ENCODE measurements at regions of chr11 and their contacts with region 1.

Region 1: DNA sequence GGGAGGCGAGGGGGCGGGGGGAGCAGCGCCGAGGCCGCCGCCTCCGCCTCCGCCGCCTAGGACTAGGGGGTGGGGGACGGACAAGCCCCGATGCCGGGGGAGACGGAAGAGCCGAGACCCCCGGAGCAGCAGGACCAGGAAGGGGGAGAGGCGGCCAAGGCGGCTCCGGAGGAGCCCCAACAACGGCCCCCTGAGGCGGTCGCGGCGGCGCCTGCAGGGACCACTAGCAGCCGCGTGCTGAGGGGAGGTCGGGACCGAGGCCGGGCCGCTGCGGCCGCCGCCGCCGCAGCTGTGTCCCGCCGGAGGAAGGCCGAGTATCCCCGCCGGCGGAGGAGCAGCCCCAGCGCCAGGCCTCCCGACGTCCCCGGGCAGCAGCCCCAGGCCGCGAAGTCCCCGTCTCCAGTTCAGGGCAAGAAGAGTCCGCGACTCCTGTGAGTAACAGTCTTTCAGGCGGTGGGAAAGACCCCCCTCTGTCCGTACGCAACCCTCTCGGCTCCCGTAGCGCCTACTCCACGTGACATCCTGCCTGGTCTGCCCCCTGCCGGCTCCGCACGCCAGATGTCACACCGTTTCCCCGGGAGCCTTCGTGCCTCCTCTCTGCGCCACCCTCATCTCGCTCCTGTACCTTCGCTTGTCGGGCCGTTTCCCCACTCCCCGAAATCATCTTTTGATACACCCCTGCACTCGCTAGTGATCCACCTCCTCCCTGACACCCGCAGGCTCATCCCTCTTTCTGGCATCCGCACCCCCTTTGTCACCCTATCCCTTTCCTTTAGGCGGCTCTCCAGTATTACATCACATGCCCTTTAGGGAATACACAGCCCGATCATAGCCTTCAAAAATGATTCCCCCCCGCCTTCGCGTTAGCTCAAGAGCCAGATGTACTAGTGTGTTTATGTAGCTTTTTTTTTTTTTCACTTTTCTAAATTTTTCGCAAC is 598 bp downstream of the ZFP91 start:
- DNase-seq: peak; percentile 86
- H3K4me3 ChIP-seq: peak overlapping the region; percentile 80 to 91 (median 88)
- H3K27ac ChIP-seq: peak overlapping the region; percentile 88
- H3K4me1 ChIP-seq: peaks cover 36% of the 10 kb centered on the region
- H3K27me3 ChIP-seq: no peaks in the 10 kb centered on the region
- CTCF ChIP-seq: peak; percentile 63 to 82

Region 2: GRCh38 chr11:57667736-57668435 is 911.6 kb before region 1 on chr11 and contains the start of gene ZDHHC5:
- CTCF ChIA-PET with region 1: no interaction called
- dilution Hi-C with region 1: no loop called
- in situ Hi-C with region 1: no loop called
- intact Hi-C with region 1: loop called (anchors 5 kb)
- DNase-seq: peak; percentile 99
- H3K4me3 ChIP-seq: peak within 1 kb of the TSS; percentile 99 to 100 (median 99)
- H3K27ac ChIP-seq: peak within 1 kb of the TSS; percentile 95
- H3K4me1 ChIP-seq: peaks cover 20% of the 10 kb centered on the region
- H3K27me3 ChIP-seq: no peaks in the 10 kb centered on the region
- CTCF ChIP-seq: peak; percentile 16 to 52
- total RNA-seq, gene ZDHHC5: 81.7 to 101 TPM

Region 3: GRCh38 chr11:58495906-58496305 is 83.6 kb before region 1 on chr11:
- CTCF ChIA-PET with region 1: no interaction called
- dilution Hi-C with region 1: no loop called
- in situ Hi-C with region 1: no loop called
- intact Hi-C with region 1: no loop called
- DNase-seq: no peak
- H3K4me3 ChIP-seq: no peak overlapping the region
- H3K27ac ChIP-seq: no peak overlapping the region
- H3K4me1 ChIP-seq: peaks cover 13% of the 10 kb centered on the region
- H3K27me3 ChIP-seq: no peaks in the 10 kb centered on the region
- CTCF ChIP-seq: peak in 1 of 2 donors; percentile 13

Region 4: DNA sequence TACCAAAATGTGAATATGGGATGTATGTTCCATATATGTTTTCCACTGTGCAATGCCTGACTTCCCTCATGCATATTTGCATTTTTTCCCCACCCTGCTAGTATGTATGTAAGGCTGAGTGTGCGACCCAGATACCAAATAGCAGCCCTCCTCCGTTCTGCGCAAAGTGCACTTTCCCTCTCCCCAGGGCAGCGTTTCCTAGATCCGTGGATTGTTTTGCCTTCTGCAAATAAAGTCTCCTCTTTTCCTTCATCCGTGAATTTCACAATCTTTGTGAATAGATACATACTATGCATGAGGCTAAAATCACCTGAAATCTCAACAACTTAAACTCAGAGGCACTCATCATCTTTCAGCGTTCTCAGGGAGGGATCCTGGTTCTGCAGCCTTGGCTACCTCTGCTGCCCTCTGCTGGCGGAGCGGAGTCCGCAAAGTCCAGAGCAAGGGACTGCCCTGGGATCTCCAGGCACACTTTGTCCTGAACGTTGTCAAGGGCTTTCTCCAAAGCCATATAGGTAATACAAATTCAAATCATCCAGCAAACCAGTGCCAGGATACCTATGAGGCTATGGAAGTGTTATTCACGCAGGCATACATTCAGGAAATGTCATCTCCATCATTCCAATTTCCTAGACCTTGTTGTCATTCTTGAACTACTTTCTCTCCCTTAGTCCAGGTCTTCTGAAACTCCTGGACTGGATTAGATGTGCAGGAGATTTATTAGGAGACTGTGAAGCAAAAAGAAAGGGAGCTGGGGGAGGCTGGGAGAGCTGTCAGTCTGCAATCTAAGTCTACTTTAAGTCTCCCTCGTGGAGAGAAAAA is 96.1 kb after region 1 on chr11:
- CTCF ChIA-PET with region 1: no interaction called
- dilution Hi-C with region 1: no loop called
- in situ Hi-C with region 1: no loop called
- intact Hi-C with region 1: loop called (anchors 1 kb)
- DNase-seq: peak; percentile 44
- H3K4me3 ChIP-seq: no peak overlapping the region
- H3K27ac ChIP-seq: no peak overlapping the region
- H3K4me1 ChIP-seq: peaks cover 5% of the 10 kb centered on the region
- H3K27me3 ChIP-seq: no peaks in the 10 kb centered on the region
- CTCF ChIP-seq: peak; percentile 97 to 99

Region 5: DNA sequence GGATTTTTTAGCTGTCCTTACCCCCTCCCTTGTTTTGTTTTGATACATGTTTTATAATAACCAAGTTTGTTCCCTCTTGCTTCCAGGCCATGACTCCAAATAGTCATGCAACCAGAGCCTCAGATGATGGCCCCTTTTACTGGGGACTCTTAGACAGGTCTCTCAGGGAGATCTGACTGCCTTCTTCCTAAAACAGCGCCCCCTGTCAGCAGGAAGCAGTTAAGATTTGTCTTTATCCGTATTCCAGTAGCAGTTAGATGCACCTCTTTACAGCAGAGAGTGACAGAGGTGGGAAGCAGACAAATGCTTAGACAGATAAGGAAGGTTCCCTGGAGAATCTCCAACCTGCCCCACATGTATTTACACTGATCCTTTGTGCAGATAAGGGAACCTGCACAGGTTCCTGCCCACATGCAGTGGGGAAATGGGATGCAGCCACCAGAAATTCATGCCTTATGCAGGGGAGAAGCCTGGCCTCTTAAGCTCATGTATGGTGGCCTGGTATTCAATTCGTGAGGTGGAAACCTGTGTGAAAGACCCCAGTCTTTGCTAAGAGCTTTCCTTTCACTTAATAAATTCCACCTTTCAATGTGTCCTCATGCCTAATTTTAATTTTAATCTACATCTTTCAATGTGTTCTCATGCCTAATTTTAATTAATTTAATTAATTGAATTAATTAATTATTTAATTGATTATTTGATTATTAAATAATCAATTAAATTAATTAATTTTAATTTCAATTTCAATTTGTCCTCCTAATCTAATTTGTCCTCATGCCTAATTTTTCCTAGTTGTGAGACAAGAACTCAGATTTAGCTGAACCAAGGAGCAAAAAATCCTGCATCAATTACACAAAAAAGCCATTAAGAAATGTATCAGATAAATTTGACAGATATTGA is 163.8 kb after region 1 on chr11:
- CTCF ChIA-PET with region 1: no interaction called
- dilution Hi-C with region 1: no loop called
- in situ Hi-C with region 1: no loop called
- intact Hi-C with region 1: no loop called
- DNase-seq: no peak
- H3K4me3 ChIP-seq: no peak overlapping the region
- H3K27ac ChIP-seq: no peak overlapping the region
- H3K4me1 ChIP-seq: peaks cover 4% of the 10 kb centered on the region
- H3K27me3 ChIP-seq: no peaks in the 10 kb centered on the region
- CTCF ChIP-seq: peak in 1 of 2 donors; percentile 13

Region 6: DNA sequence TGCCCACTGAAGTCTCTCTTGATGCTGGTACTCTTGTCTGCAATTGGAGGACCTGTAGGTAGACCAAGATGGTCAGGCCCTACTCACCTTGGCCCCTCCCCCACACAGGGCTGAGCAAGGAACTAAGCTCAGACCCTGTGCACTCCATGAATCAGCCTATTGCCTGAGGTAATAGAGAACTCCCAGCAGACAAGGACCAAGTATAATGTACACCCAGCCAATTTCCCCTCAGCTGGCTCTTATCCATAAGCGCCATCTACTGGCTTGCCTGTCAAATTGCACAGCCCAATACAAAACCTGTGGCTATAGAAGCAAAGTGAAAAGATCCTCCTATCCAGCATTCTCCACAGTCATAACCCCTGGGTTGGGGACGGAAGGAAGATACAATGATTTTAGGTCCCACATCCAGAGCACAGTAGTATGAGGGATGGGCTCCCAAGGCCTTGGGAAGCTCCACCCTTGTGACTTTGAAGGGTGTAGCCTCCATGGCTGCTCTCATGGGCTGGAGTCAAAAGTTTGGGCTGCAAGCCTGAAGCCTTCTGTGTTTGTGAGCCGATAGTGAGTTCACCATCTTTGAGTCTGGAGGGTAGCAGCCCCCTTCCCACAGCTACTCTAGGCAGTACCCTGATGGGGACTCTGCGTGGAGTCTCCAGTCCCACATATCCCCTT is 209.0 kb after region 1 on chr11:
- CTCF ChIA-PET with region 1: no interaction called
- dilution Hi-C with region 1: no loop called
- in situ Hi-C with region 1: loop called in 1 of 2 experiments (anchors 5 kb)
- intact Hi-C with region 1: loop called (anchors 1 kb)
- DNase-seq: peak; percentile 77
- H3K4me3 ChIP-seq: no peak overlapping the region
- H3K27ac ChIP-seq: peak overlapping the region; percentile 62
- H3K4me1 ChIP-seq: peaks cover 20% of the 10 kb centered on the region
- H3K27me3 ChIP-seq: no peaks in the 10 kb centered on the region
- CTCF ChIP-seq: peak; percentile 94 to 97

Region 7: GRCh38 chr11:58963528-58964104 is 384.2 kb after region 1 on chr11:
- CTCF ChIA-PET with region 1: no interaction called
- dilution Hi-C with region 1: no loop called
- in situ Hi-C with region 1: no loop called
- intact Hi-C with region 1: loop called (anchors 1 kb)
- DNase-seq: peak; percentile 89
- H3K4me3 ChIP-seq: no peak overlapping the region
- H3K27ac ChIP-seq: no peak overlapping the region
- H3K4me1 ChIP-seq: peaks cover 4% of the 10 kb centered on the region
- H3K27me3 ChIP-seq: peaks cover 2% of the 10 kb centered on the region
- CTCF ChIP-seq: no peak

Region 8: DNA sequence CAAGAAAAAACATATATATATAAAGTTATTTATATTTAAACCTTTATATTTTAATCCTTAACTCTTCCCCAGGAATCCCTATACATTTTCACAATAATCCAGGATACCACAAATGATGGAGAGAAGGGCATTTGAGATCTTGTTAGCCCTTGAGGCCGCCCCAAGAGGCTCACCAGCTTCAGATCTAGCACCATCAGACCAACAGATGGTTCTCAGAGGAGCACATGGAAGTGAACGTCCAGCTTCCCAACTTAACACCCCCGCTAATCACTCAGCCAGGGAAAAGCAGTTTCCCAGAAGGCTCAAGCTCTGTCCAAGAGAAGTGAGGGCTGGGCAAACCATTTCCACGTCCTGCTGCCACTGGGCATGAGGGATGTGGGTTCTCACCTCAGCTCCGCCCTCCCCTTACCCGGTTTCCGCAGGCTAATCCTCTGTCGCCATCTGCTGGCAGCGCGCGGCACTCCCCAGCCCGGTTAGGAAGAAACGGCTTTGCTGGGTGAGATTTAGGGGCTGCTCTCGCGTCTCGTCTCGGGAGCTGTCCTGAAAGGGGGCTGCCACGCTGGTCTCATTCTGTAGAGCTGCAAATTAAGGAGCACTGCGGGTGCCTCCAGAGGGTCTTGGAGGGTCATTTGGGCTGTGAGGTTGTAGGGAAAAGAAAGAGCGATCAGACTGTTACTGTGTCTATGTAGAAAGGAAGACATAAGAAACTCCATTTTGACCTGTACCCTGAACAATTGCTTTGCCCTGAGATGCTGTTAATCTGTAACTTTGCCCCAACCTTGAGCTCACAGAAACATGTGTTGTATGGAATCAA is 556.4 kb after region 1 on chr11:
- CTCF ChIA-PET with region 1: no interaction called
- dilution Hi-C with region 1: no loop called
- in situ Hi-C with region 1: no loop called
- intact Hi-C with region 1: loop called (anchors 5 kb)
- DNase-seq: peak; percentile 36
- H3K4me3 ChIP-seq: no peak overlapping the region
- H3K27ac ChIP-seq: no peak overlapping the region
- H3K4me1 ChIP-seq: peaks cover 6% of the 10 kb centered on the region
- H3K27me3 ChIP-seq: no peaks in the 10 kb centered on the region
- CTCF ChIP-seq: peak; percentile 99 to 100